ENCODE measurements at regions of chr1 and their contacts with region 1.

Region 1: DNA sequence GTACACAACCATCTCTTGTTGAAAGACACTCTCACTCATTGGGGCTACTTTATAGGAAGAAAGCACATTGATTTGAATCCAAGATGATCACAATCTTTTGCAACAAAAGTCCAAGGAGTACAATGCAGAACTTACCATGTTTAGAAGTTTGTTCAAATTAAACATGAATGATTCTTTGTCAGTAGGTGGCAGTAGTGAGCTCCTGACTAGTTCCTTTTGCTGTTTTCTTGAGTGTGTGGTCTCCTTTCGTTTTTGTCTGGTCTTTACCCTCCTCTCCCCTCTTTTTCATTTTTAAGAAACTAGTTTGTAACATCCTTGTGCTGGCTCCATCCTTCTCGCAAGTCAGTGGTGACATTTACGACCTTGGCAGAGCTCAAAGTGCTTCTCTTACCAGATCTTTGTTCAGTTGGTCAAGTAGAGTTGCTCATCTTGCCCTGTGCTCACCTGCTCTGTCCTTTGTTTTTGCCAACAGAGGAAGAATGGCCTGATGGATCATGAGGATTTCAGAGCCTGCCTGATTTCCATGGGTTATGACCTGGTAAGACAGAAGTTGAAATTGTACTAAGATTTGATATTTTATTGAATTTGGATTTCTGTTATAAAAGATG is 35.7 kb upstream of the MTR start:
- DNase-seq: peak; percentile 16
- H3K4me3 ChIP-seq: no peak overlapping the region
- H3K27ac ChIP-seq: no peak overlapping the region
- H3K4me1 ChIP-seq: no peaks in the 10 kb centered on the region
- H3K27me3 ChIP-seq: no peaks in the 10 kb centered on the region
- CTCF ChIP-seq: peak; percentile 64 to 80

Region 2: DNA sequence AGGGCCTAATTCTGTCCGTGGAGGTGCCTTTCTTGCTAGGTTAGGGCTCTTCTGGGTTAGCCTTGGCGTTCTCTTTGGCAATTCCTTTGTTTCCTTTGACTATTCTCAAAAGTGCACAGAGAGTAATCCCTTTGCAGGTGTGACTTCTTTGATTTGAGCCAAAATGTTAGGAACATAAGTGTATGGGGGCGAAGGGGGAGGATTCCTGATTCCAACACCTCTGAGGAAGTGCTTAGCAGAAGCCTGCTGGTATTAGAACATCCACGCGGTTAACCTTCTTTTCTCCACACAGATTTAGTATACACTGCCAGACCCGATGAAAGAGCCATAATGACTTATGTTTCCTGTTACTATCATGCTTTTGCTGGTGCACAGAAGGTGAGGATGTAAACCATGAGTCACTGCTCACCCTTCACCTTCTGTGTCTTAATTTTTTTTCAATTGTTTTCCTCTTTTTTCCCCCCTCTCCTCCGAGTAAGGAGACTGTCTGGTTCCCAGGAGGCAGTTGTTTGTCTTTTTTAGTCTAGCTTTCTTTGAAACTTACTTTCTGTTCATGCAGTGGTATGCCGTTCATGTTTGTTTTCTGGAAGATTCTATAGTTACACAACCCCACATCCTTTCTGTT is 25.1 kb before region 1 on chr1:
- CTCF ChIA-PET with region 1: no interaction called
- dilution Hi-C with region 1: no loop called
- in situ Hi-C with region 1: no loop called
- intact Hi-C with region 1: no loop called
- DNase-seq: peak; percentile 11
- H3K4me3 ChIP-seq: no peak overlapping the region
- H3K27ac ChIP-seq: no peak overlapping the region
- H3K4me1 ChIP-seq: no peaks in the 10 kb centered on the region
- H3K27me3 ChIP-seq: peaks cover 2% of the 10 kb centered on the region
- CTCF ChIP-seq: no peak

Region 3: GRCh38 chr1:236868625-236869467 is 109.5 kb after region 1 on chr1:
- CTCF ChIA-PET with region 1: no interaction called
- dilution Hi-C with region 1: no loop called
- in situ Hi-C with region 1: no loop called
- intact Hi-C with region 1: loop called (anchors 1 kb)
- DNase-seq: peak; percentile 41
- H3K4me3 ChIP-seq: no peak overlapping the region
- H3K27ac ChIP-seq: no peak overlapping the region
- H3K4me1 ChIP-seq: no peaks in the 10 kb centered on the region
- H3K27me3 ChIP-seq: no peaks in the 10 kb centered on the region
- CTCF ChIP-seq: peak; percentile 96 to 98

Region 4: GRCh38 chr1:236920286-236920894 is 161.0 kb after region 1 on chr1:
- CTCF ChIA-PET with region 1: no interaction called
- dilution Hi-C with region 1: no loop called
- in situ Hi-C with region 1: no loop called
- intact Hi-C with region 1: no loop called
- DNase-seq: no peak
- H3K4me3 ChIP-seq: no peak overlapping the region
- H3K27ac ChIP-seq: no peak overlapping the region
- H3K4me1 ChIP-seq: no peaks in the 10 kb centered on the region
- H3K27me3 ChIP-seq: no peaks in the 10 kb centered on the region
- CTCF ChIP-seq: no peak

Region 5: DNA sequence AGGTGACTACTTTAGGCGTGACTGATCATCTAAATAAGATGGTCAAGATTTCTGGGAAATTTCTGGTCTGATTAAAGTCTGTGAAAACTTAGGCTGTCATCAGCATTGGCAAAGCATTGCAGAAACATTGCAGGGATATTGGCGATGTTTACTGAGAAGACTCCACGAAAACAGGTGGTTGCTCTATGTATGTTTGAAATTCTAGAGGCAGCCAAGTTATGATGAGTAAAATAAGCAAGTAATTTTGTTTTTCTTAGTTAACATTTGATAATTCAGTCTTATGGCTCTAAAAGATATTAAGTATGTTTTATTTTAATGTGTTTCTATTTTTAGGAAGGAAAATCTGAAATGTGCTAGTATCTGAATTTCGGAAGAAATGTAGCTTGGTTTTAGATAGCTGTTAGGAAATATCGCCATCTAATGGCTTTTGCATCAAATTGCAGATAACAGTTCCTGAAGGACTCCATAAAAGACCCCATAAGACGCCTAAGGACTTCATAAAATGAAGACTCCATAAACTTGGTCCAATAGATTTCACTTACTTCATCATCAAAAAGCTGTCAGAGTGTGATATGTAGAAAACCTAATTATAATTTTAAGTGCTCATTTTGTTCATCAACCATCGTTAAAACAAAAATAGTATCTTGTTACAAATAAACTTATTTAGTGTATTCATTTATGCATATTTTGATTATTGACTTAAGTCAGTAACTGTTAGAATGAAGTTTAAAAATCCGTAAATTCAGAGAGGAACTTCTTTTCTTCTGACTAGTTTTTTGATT is 627.2 kb after region 1 on chr1:
- CTCF ChIA-PET with region 1: interaction called, 4 read pairs
- dilution Hi-C with region 1: no loop called
- in situ Hi-C with region 1: loop called in 1 of 2 experiments (anchors 25 kb)
- intact Hi-C with region 1: loop called (anchors 1 kb)
- DNase-seq: no peak
- H3K4me3 ChIP-seq: no peak overlapping the region
- H3K27ac ChIP-seq: no peak overlapping the region
- H3K4me1 ChIP-seq: no peaks in the 10 kb centered on the region
- H3K27me3 ChIP-seq: no peaks in the 10 kb centered on the region
- CTCF ChIP-seq: peak; percentile 65 to 73

Region 6: GRCh38 chr1:237562242-237562823 is 803.0 kb after region 1 on chr1:
- CTCF ChIA-PET with region 1: no interaction called
- dilution Hi-C with region 1: no loop called
- in situ Hi-C with region 1: no loop called
- intact Hi-C with region 1: loop called (anchors 5 kb)
- DNase-seq: peak; percentile 66
- H3K4me3 ChIP-seq: no peak overlapping the region
- H3K27ac ChIP-seq: no peak overlapping the region
- H3K4me1 ChIP-seq: no peaks in the 10 kb centered on the region
- H3K27me3 ChIP-seq: no peaks in the 10 kb centered on the region
- CTCF ChIP-seq: peak; percentile 58 to 78